MCF 10A (cell line): ENCODE measurements at regions of chr7 and their contacts with region 1.

Region 1: DNA sequence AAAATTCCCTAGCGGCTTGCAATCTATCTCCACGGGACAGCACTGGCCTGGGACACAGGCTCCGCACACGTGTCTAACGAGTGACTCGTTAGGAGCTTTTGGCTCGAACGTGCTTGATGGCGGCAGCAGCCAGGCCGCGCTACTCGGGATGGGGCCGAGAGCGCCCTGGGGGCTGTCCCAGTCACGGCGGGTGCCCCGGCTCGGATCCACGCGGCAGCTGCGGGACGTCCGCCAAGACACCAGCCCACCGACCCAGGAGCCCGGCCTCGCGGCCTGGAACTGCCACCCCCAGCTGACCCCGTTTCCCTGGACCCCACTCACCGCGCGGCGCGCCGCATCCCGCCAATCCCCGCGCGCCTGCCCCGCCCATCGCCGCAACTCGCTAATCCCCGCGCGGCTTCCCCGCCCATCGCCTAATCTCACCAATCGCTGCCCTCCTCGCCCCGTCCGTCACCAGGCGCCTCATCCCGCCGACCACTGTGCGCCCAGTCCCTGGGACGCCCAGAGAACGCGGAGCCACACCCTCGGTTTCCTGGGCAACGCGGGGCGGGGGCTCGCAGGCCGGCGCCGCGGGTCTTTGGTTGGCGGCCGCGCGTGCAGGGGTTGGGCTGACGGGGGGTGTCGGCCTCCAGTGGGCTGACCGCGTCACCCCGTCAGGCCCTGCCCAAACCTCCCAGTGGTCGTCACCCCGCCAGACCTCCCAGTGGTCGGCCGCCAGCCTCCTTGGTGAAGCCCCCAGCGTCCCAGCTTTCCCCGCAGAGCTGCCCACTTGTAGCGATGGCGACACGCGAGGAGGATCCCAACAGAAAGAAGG is at the start of gene POLD2:
- DNase-seq: peak; percentile 95
- H3K4me3 Mint-ChIP-seq: peak within 1 kb of the TSS; percentile 77
- H3K27ac Mint-ChIP-seq: peak within 1 kb of the TSS; percentile 86
- H3K4me1 Mint-ChIP-seq: peaks cover 27% of the 10 kb centered on the region
- H3K27me3 Mint-ChIP-seq: no peaks in the 10 kb centered on the region
- CTCF ChIP-seq: no peak
- total RNA-seq, gene POLD2: 118 and 179 TPM in 2 replicates

Region 2: GRCh38 chr7:44072364-44073231 is 50.8 kb before region 1 on chr7:
- CTCF ChIA-PET with region 1: interaction called, 3 read pairs
- POLR2A ChIA-PET with region 1: interaction called, 13 read pairs
- intact Hi-C with region 1: no loop called
- DNase-seq: peak; percentile 96
- H3K4me3 Mint-ChIP-seq: peak overlapping the region; percentile 54
- H3K27ac Mint-ChIP-seq: peak overlapping the region; percentile 42
- H3K4me1 Mint-ChIP-seq: peaks cover 35% of the 10 kb centered on the region
- H3K27me3 Mint-ChIP-seq: no peaks in the 10 kb centered on the region
- CTCF ChIP-seq: peak; percentile 80

Region 3: GRCh38 chr7:44082541-44083207 is 40.7 kb before region 1 on chr7:
- CTCF ChIA-PET with region 1: no interaction called
- POLR2A ChIA-PET with region 1: interaction called, 3 read pairs
- intact Hi-C with region 1: loop called (anchors 5 kb)
- DNase-seq: peak; percentile 99
- H3K4me3 Mint-ChIP-seq: peak overlapping the region; percentile 87
- H3K27ac Mint-ChIP-seq: peak overlapping the region; percentile 85
- H3K4me1 Mint-ChIP-seq: peaks cover 7% of the 10 kb centered on the region
- H3K27me3 Mint-ChIP-seq: no peaks in the 10 kb centered on the region
- CTCF ChIP-seq: no peak

Region 4: GRCh38 chr7:44184206-44184872 is 60.9 kb after region 1 on chr7:
- CTCF ChIA-PET with region 1: no interaction called
- POLR2A ChIA-PET with region 1: interaction called, 10 read pairs
- intact Hi-C with region 1: no loop called
- DNase-seq: peak; percentile 97
- H3K4me3 Mint-ChIP-seq: peak overlapping the region; percentile 2
- H3K27ac Mint-ChIP-seq: peak overlapping the region; percentile 39
- H3K4me1 Mint-ChIP-seq: peaks cover 21% of the 10 kb centered on the region
- H3K27me3 Mint-ChIP-seq: no peaks in the 10 kb centered on the region
- CTCF ChIP-seq: no peak